Upper lobe of right lung (tissue), 1 donor: ENCODE measurements at regions of chr2 and their contacts with region 1.

Region 1: GRCh38 chr2:85288244-85288725 is 39.5 kb downstream of the TGOLN2 start:
- DNase-seq: no peak
- ATAC-seq: peak; percentile 52
- H3K4me3 ChIP-seq: no peak overlapping the region
- H3K27ac ChIP-seq: no peak overlapping the region
- H3K4me1 ChIP-seq: peaks cover 7% of the 10 kb centered on the region
- H3K27me3 ChIP-seq: no peaks in the 10 kb centered on the region
- CTCF ChIP-seq: no peak

Region 2: GRCh38 chr2:85066874-85067351 is 221.4 kb before region 1 on chr2:
- intact Hi-C with region 1: loop called (anchors 10 kb)
- DNase-seq: peak; percentile 81
- ATAC-seq: peak; percentile 86
- H3K4me3 ChIP-seq: peak overlapping the region; percentile 33
- H3K27ac ChIP-seq: no peak overlapping the region
- H3K4me1 ChIP-seq: peaks cover 4% of the 10 kb centered on the region
- H3K27me3 ChIP-seq: peaks cover 3% of the 10 kb centered on the region
- CTCF ChIP-seq: peak; percentile 90

Region 3: GRCh38 chr2:85132834-85133637 is 155.2 kb before region 1 on chr2 and contains the start of gene TCF7L1:
- intact Hi-C with region 1: loop called (anchors 5 kb)
- DNase-seq: peak; percentile 92
- ATAC-seq: peak; percentile 93
- H3K4me3 ChIP-seq: peak within 1 kb of the TSS; percentile 82
- H3K27ac ChIP-seq: peak within 1 kb of the TSS; percentile 72
- H3K4me1 ChIP-seq: peaks cover 11% of the 10 kb centered on the region
- H3K27me3 ChIP-seq: peaks cover 4% of the 10 kb centered on the region
- CTCF ChIP-seq: peak; percentile 85
- total RNA-seq, gene TCF7L1: 21.1 TPM